ENCODE measurements at regions of chr14 and their contacts with region 1.

Region 1: DNA sequence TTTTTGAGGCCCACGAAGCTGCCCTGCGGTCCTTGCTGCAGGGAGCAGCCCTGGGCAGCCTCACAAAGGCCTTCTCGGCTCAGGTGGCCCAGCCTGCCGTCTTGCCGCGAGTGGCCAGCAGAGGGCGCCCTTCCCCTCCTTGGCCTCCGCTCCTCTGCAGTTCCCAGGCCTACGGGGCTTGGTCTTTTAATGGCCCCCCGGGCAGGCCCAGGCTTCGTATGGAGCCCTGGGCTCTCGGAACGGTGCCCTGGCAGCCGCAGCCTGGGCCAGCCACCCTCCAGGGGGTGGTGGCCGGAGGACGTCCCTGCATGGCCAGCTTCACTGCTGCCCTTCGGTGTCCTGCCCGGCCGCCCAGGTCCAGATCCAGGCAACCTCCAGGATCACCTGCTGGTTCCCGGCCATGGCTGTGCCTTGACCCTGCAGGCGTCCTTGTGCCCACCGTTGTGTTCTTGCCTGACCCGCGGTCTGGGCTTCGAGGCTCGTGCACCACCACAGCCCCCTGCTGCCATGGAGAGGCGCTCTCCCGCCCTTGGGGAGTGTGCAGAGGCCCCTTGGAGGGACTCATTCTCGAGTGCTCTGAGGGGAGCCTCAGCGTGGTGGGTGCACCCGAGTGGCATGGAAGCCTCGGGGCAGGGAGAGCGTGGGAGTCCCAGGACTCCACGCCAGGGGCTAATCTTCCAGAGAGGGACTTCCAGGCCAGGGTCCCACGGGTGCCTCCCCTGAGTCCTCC is 9.4 kb downstream of the ASPG start:
- DNase-seq: peak; percentile 58 to 99
- H3K4me3 ChIP-seq: no peak overlapping the region
- H3K27ac ChIP-seq: no peak overlapping the region
- H3K4me1 ChIP-seq: peaks cover 0 to 7% (median 4%) of the 10 kb centered on the region in 4 experiments; a peak in 3 of 7 replicates
- H3K27me3 ChIP-seq: no peaks in the 10 kb centered on the region; a peak in 3 of 7 replicates
- CTCF ChIP-seq: peak in 2 of 3 experiments; percentile 87 to 94; a peak in 3 of 4 replicates
- EP300 ChIP-seq: no peak
- POLR2A ChIP-seq: no peak
- RAD21 ChIP-seq: peak; percentile 76 to 79

Region 2: GRCh38 chr14:103220134-103220981 is 874.5 kb before region 1 on chr14:
- CTCF ChIA-PET with region 1: no interaction called
- POLR2A ChIA-PET with region 1: no interaction called
- DNase-seq: no peak
- H3K4me3 ChIP-seq: peak overlapping the region; percentile 31 to 72 (median 39)
- H3K27ac ChIP-seq: no peak overlapping the region
- H3K4me1 ChIP-seq: peaks cover 0 to 8% (median 4%) of the 10 kb centered on the region in 4 experiments; a peak in 5 of 7 replicates
- H3K27me3 ChIP-seq: peaks cover 8 to 28% (median 23%) of the 10 kb centered on the region in 4 experiments
- CTCF ChIP-seq: no peak
- EP300 ChIP-seq: no peak
- POLR2A ChIP-seq: no peak
- RAD21 ChIP-seq: peak in 1 of 2 experiments; percentile 3; a peak in 1 of 4 replicates

Region 3: GRCh38 chr14:104108216-104108569 is 13.3 kb after region 1 on chr14:
- CTCF ChIA-PET with region 1: interaction called, 16 read pairs
- POLR2A ChIA-PET with region 1: no interaction called
- DNase-seq: peak in 1 of 2 experiments; percentile 46
- H3K4me3 ChIP-seq: no peak overlapping the region
- H3K27ac ChIP-seq: no peak overlapping the region
- H3K4me1 ChIP-seq: peaks cover 0 to 14% (median 1%) of the 10 kb centered on the region in 4 experiments; a peak in 5 of 7 replicates
- H3K27me3 ChIP-seq: no peaks in the 10 kb centered on the region
- CTCF ChIP-seq: no peak
- EP300 ChIP-seq: no peak
- POLR2A ChIP-seq: no peak
- RAD21 ChIP-seq: no peak

Region 4: GRCh38 chr14:104117256-104118008 is 22.6 kb after region 1 on chr14:
- CTCF ChIA-PET with region 1: interaction called, 18 read pairs
- POLR2A ChIA-PET with region 1: no interaction called
- DNase-seq: no peak
- H3K4me3 ChIP-seq: peak overlapping the region; percentile 23 to 62 (median 28); a peak in 7 of 8 replicates
- H3K27ac ChIP-seq: no peak overlapping the region
- H3K4me1 ChIP-seq: peaks cover 0 to 11% (median 3%) of the 10 kb centered on the region in 4 experiments; a peak in 5 of 7 replicates
- H3K27me3 ChIP-seq: peaks cover 17 to 39% (median 29%) of the 10 kb centered on the region in 4 experiments
- CTCF ChIP-seq: no peak
- EP300 ChIP-seq: no peak
- POLR2A ChIP-seq: no peak
- RAD21 ChIP-seq: no peak

Region 5: DNA sequence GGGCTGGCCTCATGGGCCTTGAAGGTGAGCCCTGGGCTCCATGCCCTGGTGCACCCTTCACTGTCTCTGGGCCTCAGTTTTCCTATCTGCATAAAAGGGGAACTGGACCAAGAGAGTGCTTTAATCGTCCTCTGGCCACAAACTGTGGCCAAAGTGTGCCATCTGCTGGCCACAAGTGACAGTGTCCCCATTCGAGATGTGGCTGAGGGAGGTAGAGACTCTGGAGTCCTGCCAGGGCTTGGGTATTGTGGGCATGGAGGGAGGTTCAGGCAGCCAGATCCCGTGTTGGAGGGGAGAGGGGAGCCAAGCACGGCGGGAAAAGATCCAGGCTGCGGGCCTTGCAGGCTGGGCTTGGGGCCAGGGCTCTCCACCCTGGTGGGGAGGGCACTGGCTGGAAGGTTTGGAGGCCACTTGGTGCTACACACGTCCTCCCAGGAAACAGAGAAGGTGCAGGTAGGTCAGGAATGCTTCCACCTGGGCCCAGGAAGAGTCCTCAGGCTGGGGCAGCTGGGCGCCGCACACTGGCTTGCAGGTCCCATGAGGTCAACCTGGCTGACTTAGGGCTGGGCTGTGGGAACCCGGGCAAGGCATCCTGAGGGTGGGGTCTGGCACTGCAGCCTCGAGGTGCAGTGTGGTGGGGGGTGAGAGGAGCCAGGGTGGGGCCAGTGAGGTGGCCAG is 36.2 kb after region 1 on chr14:
- CTCF ChIA-PET with region 1: interaction called, 76 read pairs
- POLR2A ChIA-PET with region 1: no interaction called
- DNase-seq: peak in 1 of 2 experiments; percentile 72
- H3K4me3 ChIP-seq: no peak overlapping the region
- H3K27ac ChIP-seq: no peak overlapping the region
- H3K4me1 ChIP-seq: peaks cover 0 to 12% (median 10%) of the 10 kb centered on the region in 4 experiments; a peak in 6 of 7 replicates
- H3K27me3 ChIP-seq: peaks cover 10 to 17% (median 11%) of the 10 kb centered on the region in 4 experiments; a peak in 6 of 7 replicates
- CTCF ChIP-seq: peak in 2 of 3 experiments; percentile 92 to 94; a peak in 3 of 4 replicates
- EP300 ChIP-seq: no peak
- POLR2A ChIP-seq: no peak
- RAD21 ChIP-seq: peak; percentile 92 to 95

Measured in H1 (cell line).